Head of caudate nucleus (tissue), 42 donors: ENCODE measurements at regions of chr5 and their contacts with region 1.

Region 1: GRCh38 chr5:14142827-14143548 is at the start of gene TRIO:
- DNase-seq: peak; percentile 65 to 97 (median 92)

Region 2: DNA sequence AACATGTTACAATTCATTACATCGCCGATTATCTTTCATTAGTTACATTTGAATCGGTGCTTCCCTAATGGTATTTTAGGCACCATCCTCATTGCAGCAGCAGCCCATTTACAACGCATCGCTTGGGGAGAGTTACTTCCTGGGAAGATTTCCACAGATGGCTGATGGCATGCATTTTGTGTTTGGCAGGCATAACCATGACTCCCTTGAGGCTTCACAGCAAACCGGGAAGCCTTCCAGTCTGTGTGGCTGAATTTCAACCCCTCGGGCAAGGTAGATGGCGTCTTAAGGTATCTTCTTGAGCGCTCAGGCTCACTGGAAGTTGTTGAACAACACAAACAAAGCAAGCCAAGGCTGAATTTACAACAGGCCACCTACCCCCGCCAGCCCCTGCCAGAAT is 196.9 kb before region 1 on chr5:
- intact Hi-C with region 1: no loop called
- DNase-seq: peak in 3 of 42 donors; percentile 15 to 48 (median 21)

Region 3: GRCh38 chr5:14011089-14012004 is 131.6 kb before region 1 on chr5:
- intact Hi-C with region 1: loop called (anchors 2 kb)
- DNase-seq: peak; percentile 48 to 91 (median 82)

Region 4: GRCh38 chr5:14264604-14265316 is 121.8 kb after region 1 on chr5:
- intact Hi-C with region 1: loop called (anchors 5 kb)
- DNase-seq: peak; percentile 82 to 96 (median 92)

Region 5: GRCh38 chr5:14664302-14665100 is 521.5 kb after region 1 on chr5 and contains the start of gene OTULIN:
- intact Hi-C with region 1: loop called (anchors 10 kb)
- DNase-seq: peak; percentile 72 to 96 (median 91)